GM18951 (cell line): ENCODE measurements at regions of chrX and their contacts with region 1.

Region 1: GRCh38 chrX:78029663-78030062 is 60.2 kb upstream of the PGAM4 start:
- POLR2A ChIP-seq: no peak

Region 2: DNA sequence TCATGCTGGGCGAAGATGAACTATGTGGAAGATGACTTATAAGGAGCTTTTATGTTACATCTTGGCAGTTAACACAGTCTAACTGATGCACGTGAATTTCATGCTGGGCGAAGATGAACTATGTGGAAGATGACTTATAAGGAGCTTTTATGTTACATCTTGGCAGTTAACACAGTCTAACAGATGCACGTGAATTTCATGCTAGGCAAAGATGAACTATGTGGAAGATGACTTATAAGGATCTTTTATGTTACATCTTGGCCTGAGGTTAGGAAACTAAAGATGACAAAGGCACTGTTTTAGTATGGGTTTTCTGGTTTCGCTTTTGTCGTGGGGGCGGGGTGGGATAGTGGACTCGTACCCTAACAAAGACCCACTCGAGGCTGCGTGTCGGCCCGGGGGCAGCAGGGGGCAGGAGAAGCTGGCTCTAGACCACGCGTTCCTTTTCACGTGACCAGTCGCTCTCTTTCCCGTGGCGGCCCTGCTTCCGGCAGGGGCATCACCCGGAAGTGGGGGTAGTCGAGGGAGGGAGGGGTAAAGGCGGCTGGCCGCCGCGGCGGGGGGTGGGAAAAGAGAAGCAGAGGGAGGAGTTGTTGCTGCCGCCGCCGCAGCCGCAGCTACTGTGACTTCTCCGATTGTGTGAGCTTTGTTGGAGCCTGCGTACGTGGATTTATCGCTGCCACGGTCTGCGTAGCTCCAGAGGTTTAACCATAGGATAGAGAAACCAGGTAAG is 119.4 kb before region 1 on chrX and contains the start of gene ATP7A:
- in situ Hi-C with region 1: loop called (anchors 10 kb)
- POLR2A ChIP-seq: peak; percentile 66